Left colon (tissue), 2 donors: ENCODE measurements at regions of chr4 and their contacts with region 1.

Region 1: GRCh38 chr4:8241895-8242696 is 27.5 kb upstream of the HTRA3 start:
- DNase-seq: peak; percentile 74 to 88
- ATAC-seq: peak; percentile 63

Region 2: DNA sequence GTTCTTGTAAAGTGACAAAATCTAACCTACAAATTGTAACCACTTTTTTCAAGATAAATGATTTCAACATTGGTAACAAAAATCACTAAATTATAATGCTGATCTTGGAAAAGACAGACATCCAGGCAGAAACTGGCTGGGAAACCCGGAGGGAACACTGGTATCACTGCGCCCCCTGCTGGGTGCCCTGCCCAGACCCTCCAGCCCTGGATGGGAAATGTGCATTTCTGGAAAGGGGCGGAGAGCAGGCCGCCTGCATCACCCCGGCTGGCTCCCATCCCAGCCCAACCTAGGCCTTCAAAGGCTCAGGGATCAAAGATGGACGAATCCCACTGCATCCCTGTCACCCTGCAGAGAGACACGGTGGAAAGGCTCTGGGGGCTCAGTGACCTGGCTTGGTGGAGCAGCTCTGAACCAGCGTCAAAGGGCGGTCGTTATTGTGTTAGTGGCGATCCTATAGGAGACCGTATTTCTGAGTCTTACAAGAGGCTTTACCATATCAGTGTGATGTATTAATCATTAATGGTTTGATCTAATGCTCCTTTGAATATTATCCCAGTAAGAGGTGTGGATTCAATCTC is 161.2 kb after region 1 on chr4:
- intact Hi-C with region 1: loop called (anchors 2 to 5 kb)
- DNase-seq: peak; percentile 62 to 82
- ATAC-seq: peak; percentile 69